Gastrocnemius medialis (tissue), 4 donors: ENCODE measurements at regions of chr22 and their contacts with region 1.

Region 1: GRCh38 chr22:28442264-28442710 is 237.4 kb downstream of the TTC28 start:
- DNase-seq: peak; percentile 59 to 73
- ATAC-seq: peak; percentile 50 to 53
- H3K4me3 ChIP-seq: peak overlapping the region; percentile 59 to 69 (median 61)
- H3K27ac ChIP-seq: peak overlapping the region; percentile 80 to 88 (median 85)
- H3K4me1 ChIP-seq: peaks cover 57 to 78% of the 10 kb centered on the region in 2 donors
- H3K27me3 ChIP-seq: no peaks in the 10 kb centered on the region
- CTCF ChIP-seq: peak; percentile 46 to 75 (median 68)
- POLR2A ChIP-seq: no peak

Region 2: GRCh38 chr22:27866132-27867086 is 575.9 kb before region 1 on chr22:
- in situ Hi-C with region 1: no loop called
- intact Hi-C with region 1: loop called (anchors 10 kb)
- DNase-seq: peak; percentile 63 to 65
- ATAC-seq: peak; percentile 80 to 89
- H3K4me3 ChIP-seq: peak overlapping the region in 3 of 4 donors; percentile 5 to 16 (median 7)
- H3K27ac ChIP-seq: peak overlapping the region; percentile 77 to 88 (median 80)
- H3K4me1 ChIP-seq: peaks cover 42 to 47% of the 10 kb centered on the region in 2 donors
- H3K27me3 ChIP-seq: no peaks in the 10 kb centered on the region
- CTCF ChIP-seq: no peak
- POLR2A ChIP-seq: no peak

Region 3: GRCh38 chr22:28034760-28035401 is 407.4 kb before region 1 on chr22:
- in situ Hi-C with region 1: loop called in 1 of 4 experiments (anchors 25 kb)
- intact Hi-C with region 1: loop called (anchors 5 kb)
- DNase-seq: peak; percentile 97 to 99
- ATAC-seq: peak; percentile 96 to 97
- H3K4me3 ChIP-seq: peak overlapping the region; percentile 12 to 43 (median 25)
- H3K27ac ChIP-seq: peak overlapping the region; percentile 93 to 98 (median 94)
- H3K4me1 ChIP-seq: peaks cover 43 to 46% of the 10 kb centered on the region in 2 donors
- H3K27me3 ChIP-seq: no peaks in the 10 kb centered on the region
- CTCF ChIP-seq: no peak
- POLR2A ChIP-seq: peak; percentile 49 to 56

Region 4: GRCh38 chr22:28051787-28052356 is 390.4 kb before region 1 on chr22:
- in situ Hi-C with region 1: loop called in 2 of 4 experiments (anchors 25 kb)
- intact Hi-C with region 1: no loop called
- DNase-seq: peak in 1 of 2 donors; percentile 62
- ATAC-seq: peak in 1 of 2 donors; percentile 72
- H3K4me3 ChIP-seq: no peak overlapping the region
- H3K27ac ChIP-seq: no peak overlapping the region
- H3K4me1 ChIP-seq: peaks cover 0 to 7% of the 10 kb centered on the region in 2 donors
- H3K27me3 ChIP-seq: no peaks in the 10 kb centered on the region
- CTCF ChIP-seq: peak; percentile 75 to 92 (median 83)
- POLR2A ChIP-seq: no peak

Region 5: DNA sequence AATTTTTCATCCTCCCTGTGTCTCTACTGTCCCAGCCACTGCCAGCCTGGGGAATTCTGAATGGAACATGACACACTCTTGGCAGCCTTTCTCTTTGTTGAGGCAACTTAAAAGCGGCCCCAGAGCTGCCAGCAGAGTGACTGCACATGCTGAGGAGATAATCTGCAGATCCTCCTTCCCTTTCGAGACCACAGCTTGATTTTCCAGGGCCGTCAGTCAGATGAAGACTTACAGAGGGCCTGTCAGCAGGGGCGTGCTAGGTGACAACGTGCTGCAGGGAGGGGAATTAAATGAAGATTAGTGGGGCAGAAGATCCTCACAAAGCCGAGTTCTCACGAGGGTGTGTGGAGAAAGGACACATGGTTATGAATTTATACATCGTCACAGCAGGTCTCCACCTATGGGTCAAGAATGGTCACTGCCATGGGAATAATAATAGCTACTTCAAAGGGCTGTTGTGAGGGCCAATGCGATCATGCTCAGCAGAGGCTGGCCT is 329.7 kb before region 1 on chr22:
- in situ Hi-C with region 1: no loop called
- intact Hi-C with region 1: loop called (anchors 5 kb)
- DNase-seq: peak; percentile 49 to 70
- ATAC-seq: peak; percentile 91 to 92
- H3K4me3 ChIP-seq: peak overlapping the region; percentile 11 to 53 (median 28)
- H3K27ac ChIP-seq: peak overlapping the region; percentile 68 to 78 (median 71)
- H3K4me1 ChIP-seq: peaks cover 11 to 23% of the 10 kb centered on the region in 2 donors
- H3K27me3 ChIP-seq: no peaks in the 10 kb centered on the region
- CTCF ChIP-seq: peak; percentile 22 to 59 (median 53)
- POLR2A ChIP-seq: no peak

Region 6: GRCh38 chr22:28268171-28268570 is 174.1 kb before region 1 on chr22:
- in situ Hi-C with region 1: no loop called
- intact Hi-C with region 1: loop called (anchors 5 kb)
- DNase-seq: peak in 1 of 2 donors; percentile 21
- ATAC-seq: peak; percentile 48 to 55
- H3K4me3 ChIP-seq: peak overlapping the region in 2 of 4 donors; percentile 1 to 30
- H3K27ac ChIP-seq: peak overlapping the region; percentile 24 to 76 (median 58)
- H3K4me1 ChIP-seq: peaks cover 26 to 35% of the 10 kb centered on the region in 2 donors
- H3K27me3 ChIP-seq: no peaks in the 10 kb centered on the region
- CTCF ChIP-seq: no peak
- POLR2A ChIP-seq: no peak

Region 7: GRCh38 chr22:28360939-28361338 is 81.3 kb before region 1 on chr22:
- in situ Hi-C with region 1: no loop called
- intact Hi-C with region 1: loop called (anchors 5 kb)
- DNase-seq: no peak
- ATAC-seq: no peak
- H3K4me3 ChIP-seq: no peak overlapping the region
- H3K27ac ChIP-seq: no peak overlapping the region
- H3K4me1 ChIP-seq: peaks cover 10 to 42% of the 10 kb centered on the region in 2 donors
- H3K27me3 ChIP-seq: no peaks in the 10 kb centered on the region
- CTCF ChIP-seq: no peak
- POLR2A ChIP-seq: no peak

Region 8: GRCh38 chr22:28674121-28674563 is 231.9 kb after region 1 on chr22:
- in situ Hi-C with region 1: no loop called
- intact Hi-C with region 1: no loop called
- DNase-seq: no peak
- ATAC-seq: no peak
- H3K4me3 ChIP-seq: no peak overlapping the region
- H3K27ac ChIP-seq: no peak overlapping the region
- H3K4me1 ChIP-seq: peaks cover 0 to 5% of the 10 kb centered on the region in 2 donors
- H3K27me3 ChIP-seq: no peaks in the 10 kb centered on the region
- CTCF ChIP-seq: no peak
- POLR2A ChIP-seq: no peak